ENCODE measurements at regions of chr2 and their contacts with region 1.

Region 1: GRCh38 chr2:121356058-121356640 is 71.1 kb upstream of the TFCP2L1 start:
- DNase-seq: peak; percentile 36
- H3K4me3 Mint-ChIP-seq: no peak overlapping the region
- H3K27ac Mint-ChIP-seq: no peak overlapping the region
- H3K4me1 Mint-ChIP-seq: no peaks in the 10 kb centered on the region
- H3K27me3 Mint-ChIP-seq: no peaks in the 10 kb centered on the region

Region 2: DNA sequence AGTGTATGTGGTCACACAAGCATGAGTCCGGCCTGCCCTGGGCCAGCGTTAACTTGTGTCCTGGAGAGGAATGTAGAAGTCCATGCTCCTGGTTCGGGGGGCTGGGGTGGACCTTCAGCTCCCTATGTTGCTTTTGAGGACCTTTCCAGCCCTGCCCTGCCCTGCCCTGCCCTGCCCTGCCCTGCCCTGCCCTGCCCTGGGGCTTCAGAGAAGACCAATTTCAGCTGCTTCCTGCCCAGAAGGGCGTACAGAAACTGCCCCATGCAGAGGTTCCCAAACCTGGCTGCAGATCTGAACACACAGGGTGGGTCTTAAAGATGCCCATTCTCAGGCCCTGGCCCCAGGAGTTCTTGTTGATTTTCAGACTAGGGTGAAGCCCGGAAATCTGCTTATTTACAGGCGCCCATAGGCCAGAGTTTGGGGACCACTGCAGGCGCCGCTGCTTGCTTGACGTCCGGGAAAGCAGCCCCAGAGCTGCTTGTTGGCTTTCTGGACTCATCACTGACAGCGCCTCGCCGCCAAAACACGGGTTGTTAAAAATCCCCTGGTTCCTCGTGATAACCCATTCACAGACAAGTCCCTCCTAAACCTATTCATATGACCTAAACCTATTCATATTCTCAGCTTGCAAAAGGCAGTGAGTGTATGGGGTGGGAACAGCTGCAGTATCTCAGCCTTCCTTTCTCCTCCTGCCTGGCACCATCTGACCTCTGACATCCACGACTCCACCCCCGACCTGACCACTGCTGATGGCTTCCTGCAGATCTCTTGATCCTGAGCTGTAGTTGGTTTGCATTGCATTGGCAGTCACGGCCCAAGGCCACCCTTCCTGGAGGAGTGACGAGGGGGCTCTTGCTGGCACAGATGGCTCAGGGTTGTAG is 422.2 kb before region 1 on chr2:
- CTCF ChIA-PET with region 1: no interaction called
- DNase-seq: no peak
- H3K4me3 Mint-ChIP-seq: no peak overlapping the region
- H3K27ac Mint-ChIP-seq: no peak overlapping the region
- H3K4me1 Mint-ChIP-seq: no peaks in the 10 kb centered on the region
- H3K27me3 Mint-ChIP-seq: no peaks in the 10 kb centered on the region

Region 3: GRCh38 chr2:121085801-121086200 is 270.3 kb before region 1 on chr2:
- CTCF ChIA-PET with region 1: interaction called, 24 read pairs
- DNase-seq: no peak
- H3K4me3 Mint-ChIP-seq: no peak overlapping the region
- H3K27ac Mint-ChIP-seq: no peak overlapping the region
- H3K4me1 Mint-ChIP-seq: no peaks in the 10 kb centered on the region
- H3K27me3 Mint-ChIP-seq: peaks cover 14% of the 10 kb centered on the region

Region 4: DNA sequence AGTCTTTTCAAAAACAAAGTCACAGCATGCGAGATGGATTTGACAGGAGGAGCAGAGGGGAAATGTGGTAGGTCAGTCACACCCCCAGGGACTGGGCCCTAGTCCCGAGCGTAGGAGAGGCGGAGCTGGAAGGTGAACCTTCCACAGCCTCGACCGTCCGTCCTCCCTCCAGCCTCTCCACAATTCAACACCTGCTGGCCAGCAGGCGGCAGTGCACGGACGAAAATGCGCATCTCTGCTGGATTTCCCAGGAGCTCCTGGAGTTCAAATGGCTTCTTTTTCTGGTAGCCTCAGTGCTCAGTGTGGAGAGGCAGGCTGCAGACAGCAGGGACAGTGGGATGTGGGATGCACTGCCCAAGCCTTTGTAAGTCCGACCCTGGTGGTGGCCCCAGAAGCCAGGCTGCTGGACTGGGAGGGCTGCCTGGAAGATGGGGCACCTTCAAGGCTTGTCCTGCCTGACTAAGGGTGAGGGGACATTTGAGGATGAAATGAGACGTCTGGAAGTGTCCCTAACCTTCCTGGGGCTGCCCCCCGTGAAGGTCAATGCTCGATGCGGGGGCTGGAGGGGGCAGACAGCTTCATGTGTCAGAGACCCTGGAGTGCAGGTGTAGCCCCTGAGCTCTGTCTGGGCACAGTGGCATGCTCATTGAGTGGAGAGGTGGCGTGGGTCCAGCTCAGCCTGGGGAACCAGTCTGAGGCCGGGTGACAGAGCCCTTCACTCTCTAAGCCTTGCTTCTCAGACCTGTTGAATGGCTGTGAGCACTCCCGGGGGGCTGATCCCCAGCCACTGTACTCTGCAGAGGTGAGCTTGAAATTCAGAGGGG is 260.7 kb before region 1 on chr2:
- CTCF ChIA-PET with region 1: interaction called, 14 read pairs
- DNase-seq: peak; percentile 39
- H3K4me3 Mint-ChIP-seq: no peak overlapping the region
- H3K27ac Mint-ChIP-seq: no peak overlapping the region
- H3K4me1 Mint-ChIP-seq: no peaks in the 10 kb centered on the region
- H3K27me3 Mint-ChIP-seq: peaks cover 22% of the 10 kb centered on the region

Region 5: DNA sequence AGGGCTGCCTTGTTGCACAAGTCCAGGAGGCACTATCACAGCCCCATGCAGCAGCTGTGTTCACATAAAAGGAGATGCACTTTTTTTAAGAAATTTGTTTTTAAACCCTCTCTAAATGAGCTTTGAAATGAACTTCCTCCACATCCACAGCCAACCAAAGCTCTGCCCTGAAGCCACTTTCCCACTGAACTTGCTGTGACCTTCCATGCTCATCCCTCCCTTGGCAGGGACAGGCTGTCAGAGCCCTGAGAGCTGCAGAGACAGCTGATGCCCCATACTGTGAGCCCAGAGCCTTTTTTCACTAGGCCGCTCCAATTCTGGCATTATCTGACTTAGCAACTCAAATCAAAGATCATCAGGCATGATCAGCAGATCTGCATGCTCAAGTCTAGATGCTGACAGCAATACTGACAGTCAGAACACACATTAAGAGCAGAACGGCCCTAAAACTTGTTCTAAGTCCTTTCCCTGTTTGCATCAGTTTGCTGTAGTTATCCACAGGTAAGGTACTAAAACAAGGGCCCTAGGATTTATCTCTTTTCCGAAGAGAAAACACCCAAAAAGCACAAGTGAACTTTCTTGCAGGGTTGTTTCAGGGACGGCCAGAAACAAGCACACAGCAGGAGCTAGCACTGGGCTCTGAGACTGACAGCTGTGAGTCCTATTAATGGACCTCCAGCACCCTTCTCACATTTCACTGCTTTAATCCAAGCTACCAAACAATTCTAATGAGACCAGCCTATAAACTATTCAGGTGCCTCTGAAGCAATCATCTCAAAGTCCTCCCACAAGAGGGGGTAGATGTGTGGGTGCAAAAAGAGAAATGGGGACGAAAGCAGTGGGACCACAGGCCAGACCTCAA is 209.5 kb after region 1 on chr2:
- CTCF ChIA-PET with region 1: no interaction called
- DNase-seq: no peak
- H3K4me3 Mint-ChIP-seq: no peak overlapping the region
- H3K27ac Mint-ChIP-seq: no peak overlapping the region
- H3K4me1 Mint-ChIP-seq: peaks cover 16% of the 10 kb centered on the region
- H3K27me3 Mint-ChIP-seq: no peaks in the 10 kb centered on the region